Activated CD4-positive, alpha-beta T cell treated with anti-CD3 and anti-CD28 coated beads, Interleukin-2, amount 10 ng/mL, durations not matched to agents 7 days and 5 days (primary cell): ENCODE measurements at regions of chr21 and their contacts with region 1.

Region 1: GRCh38 chr21:32770871-32771523 is 558 bp downstream of the PAXBP1 start:
- DNase-seq: peak; percentile 69
- H3K4me3 Mint-ChIP-seq: peak overlapping the region; percentile 98
- H3K27ac Mint-ChIP-seq: peak overlapping the region; percentile 96
- H3K4me1 Mint-ChIP-seq: peaks cover 57% of the 10 kb centered on the region
- H3K27me3 Mint-ChIP-seq: peaks cover 3% of the 10 kb centered on the region

Region 2: DNA sequence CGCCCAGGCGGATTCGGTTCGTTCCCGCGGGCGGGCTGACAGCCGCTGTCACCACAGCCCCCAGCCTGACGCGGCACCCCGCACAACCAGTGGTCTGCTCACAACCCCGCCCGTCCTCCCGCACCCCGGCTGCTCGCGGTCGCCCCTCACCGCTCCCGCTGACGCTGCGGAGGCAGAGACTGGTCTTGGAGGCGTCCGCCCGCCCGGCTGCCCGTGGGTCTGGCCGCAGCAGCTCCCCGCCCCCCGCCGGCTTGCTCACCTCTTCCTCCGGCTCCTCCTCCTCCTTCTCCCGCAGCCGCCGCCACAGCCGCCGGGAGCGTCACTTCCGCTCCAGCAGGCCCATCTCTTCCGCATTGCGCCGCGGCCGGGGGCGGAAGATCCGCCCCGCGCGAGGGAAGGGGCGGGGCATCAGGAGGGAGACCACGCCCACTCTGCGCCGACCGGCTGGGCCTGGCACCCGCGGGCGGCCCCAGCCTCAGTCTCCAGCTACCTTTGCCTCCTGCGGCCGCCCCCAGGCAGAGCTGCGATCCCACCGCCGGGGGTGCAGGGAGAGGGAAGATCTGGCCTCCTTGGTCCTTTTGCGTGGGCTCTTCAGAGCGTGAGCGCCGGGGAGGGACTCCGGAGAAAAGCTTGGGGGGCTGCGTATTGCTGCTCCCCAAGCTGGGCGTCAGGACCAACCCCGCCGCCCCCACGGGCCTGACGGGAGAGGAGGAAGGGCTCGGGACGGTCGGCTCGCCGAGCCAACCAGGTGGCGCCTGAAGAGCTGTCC is 43.1 kb before region 1 on chr21 and contains the start of gene SYNJ1:
- CTCF ChIA-PET with region 1: interaction called, 17 read pairs
- POLR2A ChIA-PET with region 1: interaction called, 9 read pairs
- DNase-seq: peak; percentile 95
- H3K4me3 Mint-ChIP-seq: peak within 1 kb of the TSS; percentile 87
- H3K27ac Mint-ChIP-seq: peak within 1 kb of the TSS; percentile 94
- H3K4me1 Mint-ChIP-seq: peaks cover 52% of the 10 kb centered on the region
- H3K27me3 Mint-ChIP-seq: no peaks in the 10 kb centered on the region
- total RNA-seq, gene SYNJ1: 16.1 to 21.1 TPM

Region 3: DNA sequence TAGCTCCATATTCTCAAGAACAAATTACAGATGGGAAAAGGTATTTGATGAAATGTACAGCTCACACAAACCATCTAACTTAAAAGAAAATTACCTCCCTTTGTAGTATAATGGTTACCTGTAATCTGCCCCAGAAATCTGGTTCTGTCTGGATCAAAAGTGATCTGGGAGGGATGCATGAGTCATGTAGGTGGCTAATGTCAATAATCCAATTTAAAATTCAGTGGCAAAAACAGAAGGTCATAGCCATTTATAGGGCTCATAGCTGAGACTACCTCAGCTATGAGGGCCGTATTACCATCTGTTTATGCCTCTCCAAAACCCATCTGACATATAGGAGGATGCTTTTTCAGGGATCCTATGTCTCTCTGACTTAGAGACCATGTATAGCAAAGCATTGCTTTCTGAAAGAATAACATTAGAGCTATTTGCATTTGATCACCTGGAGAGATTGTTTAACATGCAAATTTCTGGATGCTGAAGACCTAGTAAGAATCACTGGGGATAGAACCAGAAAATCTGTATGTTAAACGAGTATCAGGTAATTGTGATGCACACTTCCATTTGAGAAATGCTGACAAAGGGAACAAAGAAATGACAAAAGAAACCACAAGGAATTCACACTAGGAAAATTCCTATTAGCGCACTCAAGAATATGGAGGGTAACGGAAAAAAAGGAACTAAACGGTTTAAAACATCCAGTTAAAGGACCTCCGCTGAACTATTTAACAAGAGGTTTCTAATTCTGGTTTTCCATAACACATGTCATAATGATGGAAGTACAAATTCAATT is 17.0 kb before region 1 on chr21:
- CTCF ChIA-PET with region 1: interaction called, 15 read pairs
- POLR2A ChIA-PET with region 1: interaction called, 4 read pairs
- DNase-seq: no peak
- H3K4me3 Mint-ChIP-seq: no peak overlapping the region
- H3K27ac Mint-ChIP-seq: no peak overlapping the region
- H3K4me1 Mint-ChIP-seq: peaks cover 11% of the 10 kb centered on the region
- H3K27me3 Mint-ChIP-seq: no peaks in the 10 kb centered on the region